HCT116 (cell line): ENCODE measurements at regions of chr6 and their contacts with region 1.

Region 1: DNA sequence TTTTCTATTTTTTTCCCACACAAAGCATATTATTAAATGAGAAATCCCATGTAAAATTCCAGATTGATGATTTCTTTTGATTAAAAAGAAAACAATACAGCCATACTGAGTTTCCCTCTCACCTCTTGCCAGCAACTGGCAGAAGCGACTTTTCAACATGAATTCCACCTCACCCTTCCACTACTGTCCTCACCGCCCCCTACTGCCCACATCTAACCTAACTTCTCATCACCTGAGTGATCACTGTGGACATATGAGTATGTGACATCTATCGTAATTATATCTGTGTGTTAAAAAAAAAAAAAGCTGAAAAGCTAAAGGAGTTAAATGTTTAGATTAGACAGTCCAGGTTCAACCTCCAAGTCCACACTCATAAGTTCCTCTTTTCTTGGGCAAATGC is 528.6 kb downstream of the PRKN start:
- DNase-seq: no peak
- ATAC-seq: peak; percentile 63
- H3K4me3 ChIP-seq: no peak overlapping the region
- H3K27ac ChIP-seq: no peak overlapping the region
- H3K4me1 ChIP-seq: no peaks in the 10 kb centered on the region
- H3K27me3 ChIP-seq: no peaks in the 10 kb centered on the region; the same call in 1 of the 2 replicates
- CTCF ChIP-seq: peak; percentile 27 to 40 (median 38); a peak in 4 of 6 replicates
- POLR2A ChIP-seq: no peak
- RAD21 ChIP-seq: peak; percentile 50

Region 2: GRCh38 chr6:161748535-161749416 is 450.1 kb before region 1 on chr6:
- CTCF ChIA-PET with region 1: no interaction called
- POLR2A ChIA-PET with region 1: no interaction called
- RAD21 ChIA-PET with region 1: no interaction called
- intact Hi-C with region 1: loop called (anchors 2 kb)
- DNase-seq: peak; percentile 33
- ATAC-seq: peak; percentile 84
- H3K4me3 ChIP-seq: no peak overlapping the region
- H3K27ac ChIP-seq: no peak overlapping the region
- H3K4me1 ChIP-seq: peaks cover 2 to 4% of the 10 kb centered on the region in 2 experiments; a peak in 2 of 4 replicates
- H3K27me3 ChIP-seq: no peaks in the 10 kb centered on the region
- CTCF ChIP-seq: peak; percentile 31 to 78 (median 62); a peak in 5 of 6 replicates
- POLR2A ChIP-seq: no peak
- RAD21 ChIP-seq: peak; percentile 57

Region 3: GRCh38 chr6:161836643-161837448 is 362.1 kb before region 1 on chr6:
- CTCF ChIA-PET with region 1: no interaction called
- POLR2A ChIA-PET with region 1: no interaction called
- RAD21 ChIA-PET with region 1: no interaction called
- intact Hi-C with region 1: loop called (anchors 10 kb)
- DNase-seq: peak; percentile 7
- ATAC-seq: peak; percentile 57; the same call in 1 of the 2 replicates
- H3K4me3 ChIP-seq: no peak overlapping the region
- H3K27ac ChIP-seq: no peak overlapping the region
- H3K4me1 ChIP-seq: no peaks in the 10 kb centered on the region
- H3K27me3 ChIP-seq: no peaks in the 10 kb centered on the region
- CTCF ChIP-seq: peak; percentile 44 to 65 (median 52); a peak in 5 of 6 replicates
- POLR2A ChIP-seq: no peak
- RAD21 ChIP-seq: peak; percentile 75

Region 4: DNA sequence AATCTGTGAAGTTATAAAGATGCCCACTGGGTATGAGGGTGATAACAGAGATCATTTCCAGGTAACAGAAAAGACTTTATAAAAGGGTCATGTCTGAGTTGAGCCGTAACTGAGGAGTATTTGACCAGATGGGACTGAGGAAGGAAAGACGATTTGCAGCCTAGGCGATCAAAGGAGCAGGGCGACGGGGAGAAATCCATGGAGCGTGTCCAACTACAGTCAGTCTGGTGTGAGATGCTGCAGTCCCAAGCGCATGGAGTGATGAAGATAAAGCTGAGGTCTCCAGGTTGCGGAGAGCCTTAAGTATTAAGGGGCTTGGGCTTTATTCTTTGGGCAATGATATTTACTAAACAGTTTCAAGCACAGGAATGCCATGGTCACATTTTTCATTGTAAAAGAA is 362.0 kb after region 1 on chr6:
- CTCF ChIA-PET with region 1: no interaction called
- POLR2A ChIA-PET with region 1: no interaction called
- RAD21 ChIA-PET with region 1: no interaction called
- intact Hi-C with region 1: no loop called
- DNase-seq: no peak
- ATAC-seq: no peak
- H3K4me3 ChIP-seq: no peak overlapping the region
- H3K27ac ChIP-seq: no peak overlapping the region
- H3K4me1 ChIP-seq: no peaks in the 10 kb centered on the region
- H3K27me3 ChIP-seq: no peaks in the 10 kb centered on the region
- CTCF ChIP-seq: no peak
- POLR2A ChIP-seq: no peak
- RAD21 ChIP-seq: no peak